ENCODE measurements at regions of chr5 and their contacts with region 1.

Region 1: DNA sequence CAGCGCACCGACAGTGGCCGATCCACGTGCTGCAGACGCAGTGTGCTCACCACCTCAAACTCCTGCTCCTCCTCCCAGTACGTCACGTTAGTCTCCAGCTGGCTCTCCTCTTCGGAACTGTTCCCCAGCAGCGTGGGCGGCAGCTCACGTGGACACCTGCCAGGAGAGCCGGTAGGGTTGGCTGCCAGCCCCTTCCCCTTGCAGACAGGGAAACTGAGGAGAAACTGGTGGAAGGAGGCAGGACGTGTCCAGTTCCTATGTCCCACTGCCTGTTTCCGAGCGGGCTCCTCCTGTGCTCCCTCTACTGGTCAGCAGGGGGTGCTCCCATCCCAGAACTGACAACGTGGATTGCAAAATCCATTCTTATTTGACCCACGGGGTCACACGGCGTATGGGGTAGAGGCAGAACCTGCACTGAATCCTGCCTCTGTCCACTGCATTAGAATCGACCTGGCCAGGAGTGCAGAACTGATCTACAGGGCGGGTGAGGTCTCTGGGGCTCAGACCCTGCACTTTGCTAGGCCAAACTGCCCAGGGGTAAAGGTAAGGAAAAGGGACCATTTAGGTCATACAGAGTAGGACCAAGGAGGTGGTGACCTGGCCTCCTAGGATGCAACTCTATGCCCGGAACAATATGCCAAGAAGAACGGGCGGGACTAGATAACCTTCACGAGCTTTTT is 25.7 kb downstream of the PDGFRB start:
- DNase-seq: peak; percentile 71 to 94
- ATAC-seq: peak; percentile 76 to 93
- H3K4me3 ChIP-seq: no peak overlapping the region
- H3K27ac ChIP-seq: peak overlapping the region; percentile 39 to 76; a peak in 5 of 6 replicates
- H3K4me1 ChIP-seq: peaks cover 4% of the 10 kb centered on the region; the same call in 2 of the 3 replicates
- CTCF ChIP-seq: peak; percentile 96
- EP300 ChIP-seq: no peak
- POLR2A ChIP-seq: no peak
- RAD21 ChIP-seq: peak; percentile 97

Region 2: DNA sequence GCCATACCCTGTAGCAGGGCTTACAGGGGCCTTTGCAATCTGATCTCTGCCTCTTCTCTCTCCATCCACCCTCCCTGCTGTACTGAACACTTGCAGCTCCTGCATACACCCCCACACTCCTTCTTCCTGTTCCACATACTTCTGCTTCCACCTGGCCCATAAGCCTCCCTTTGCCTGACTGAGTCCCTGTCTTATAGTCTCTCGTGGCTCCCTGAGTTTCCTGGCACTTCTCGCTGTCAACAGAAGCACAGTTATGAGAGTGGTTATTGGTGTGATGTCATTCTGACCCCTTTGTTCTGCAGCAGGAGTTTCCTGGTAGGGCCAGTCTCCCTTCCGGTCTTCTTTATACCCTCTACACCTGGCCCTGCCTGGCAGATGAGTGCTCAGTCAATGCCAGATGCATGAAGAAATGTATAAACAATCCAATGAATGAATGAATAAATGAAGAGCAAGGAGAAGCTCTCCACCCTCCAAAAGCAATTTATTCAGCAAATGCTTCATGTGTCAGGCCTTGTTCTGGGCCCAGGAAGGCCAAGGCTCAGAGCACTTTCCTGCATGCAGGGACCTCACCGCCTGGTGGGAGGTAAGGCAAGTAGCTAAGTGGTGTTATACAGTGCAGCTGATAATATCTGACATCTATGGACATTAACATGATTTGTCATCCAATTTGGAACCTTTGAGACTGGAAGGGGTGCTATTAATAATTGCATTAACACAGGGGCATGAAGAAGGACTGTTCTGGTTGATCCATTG is 23.1 kb before region 1 on chr5:
- CTCF ChIA-PET with region 1: interaction called, 98 read pairs
- POLR2A ChIA-PET with region 1: no interaction called
- DNase-seq: no peak
- ATAC-seq: no peak
- H3K4me3 ChIP-seq: no peak overlapping the region
- H3K27ac ChIP-seq: no peak overlapping the region
- H3K4me1 ChIP-seq: no peaks in the 10 kb centered on the region
- CTCF ChIP-seq: no peak
- EP300 ChIP-seq: no peak
- POLR2A ChIP-seq: no peak
- RAD21 ChIP-seq: no peak

Region 3: DNA sequence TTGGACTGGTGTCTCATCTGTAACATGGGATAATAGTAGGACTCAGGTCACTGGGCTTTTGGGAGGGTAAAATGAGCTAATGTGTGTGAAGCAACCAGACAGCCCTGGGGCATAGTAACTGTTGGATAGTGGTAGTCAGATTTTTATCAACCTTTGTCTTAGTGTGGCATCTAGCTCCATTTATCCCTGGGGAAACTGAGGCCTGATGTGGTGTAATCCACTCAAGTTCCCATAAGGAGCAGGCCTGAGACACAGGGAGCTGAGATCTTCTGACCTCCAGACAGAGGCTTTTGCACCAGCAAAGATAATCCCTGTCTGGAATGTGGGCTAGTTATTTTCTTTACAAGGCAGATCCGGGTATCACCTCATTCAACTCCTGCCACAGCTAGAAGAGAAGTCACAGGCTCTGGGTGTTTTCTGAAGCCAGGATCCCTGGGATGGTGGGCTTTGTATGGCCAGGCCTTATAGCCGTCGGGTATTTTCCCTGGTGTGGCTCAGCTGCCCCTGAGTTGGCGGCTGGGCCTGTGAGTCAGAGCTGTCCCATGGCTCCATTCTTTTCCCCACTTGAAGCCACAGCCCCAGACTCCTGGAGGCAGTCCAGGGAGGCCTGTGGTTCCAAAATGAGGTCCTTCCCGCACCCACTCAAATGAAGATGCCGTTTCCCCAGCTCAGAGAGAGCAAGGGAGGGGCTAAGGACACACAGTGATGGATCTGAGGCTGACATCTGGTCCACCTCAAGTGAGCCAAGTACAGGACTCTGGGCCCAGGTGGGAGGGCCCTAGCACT is 17.5 kb before region 1 on chr5:
- CTCF ChIA-PET with region 1: interaction called, 98 read pairs
- POLR2A ChIA-PET with region 1: no interaction called
- DNase-seq: peak in 1 of 2 experiments; percentile 13
- ATAC-seq: peak in 1 of 2 experiments; percentile 51; a peak in 3 of 6 replicates
- H3K4me3 ChIP-seq: no peak overlapping the region
- H3K27ac ChIP-seq: peak overlapping the region; percentile 36 to 38; a peak in 4 of 6 replicates
- H3K4me1 ChIP-seq: peaks cover 9% of the 10 kb centered on the region
- CTCF ChIP-seq: no peak
- EP300 ChIP-seq: no peak
- POLR2A ChIP-seq: no peak
- RAD21 ChIP-seq: no peak

Region 4: DNA sequence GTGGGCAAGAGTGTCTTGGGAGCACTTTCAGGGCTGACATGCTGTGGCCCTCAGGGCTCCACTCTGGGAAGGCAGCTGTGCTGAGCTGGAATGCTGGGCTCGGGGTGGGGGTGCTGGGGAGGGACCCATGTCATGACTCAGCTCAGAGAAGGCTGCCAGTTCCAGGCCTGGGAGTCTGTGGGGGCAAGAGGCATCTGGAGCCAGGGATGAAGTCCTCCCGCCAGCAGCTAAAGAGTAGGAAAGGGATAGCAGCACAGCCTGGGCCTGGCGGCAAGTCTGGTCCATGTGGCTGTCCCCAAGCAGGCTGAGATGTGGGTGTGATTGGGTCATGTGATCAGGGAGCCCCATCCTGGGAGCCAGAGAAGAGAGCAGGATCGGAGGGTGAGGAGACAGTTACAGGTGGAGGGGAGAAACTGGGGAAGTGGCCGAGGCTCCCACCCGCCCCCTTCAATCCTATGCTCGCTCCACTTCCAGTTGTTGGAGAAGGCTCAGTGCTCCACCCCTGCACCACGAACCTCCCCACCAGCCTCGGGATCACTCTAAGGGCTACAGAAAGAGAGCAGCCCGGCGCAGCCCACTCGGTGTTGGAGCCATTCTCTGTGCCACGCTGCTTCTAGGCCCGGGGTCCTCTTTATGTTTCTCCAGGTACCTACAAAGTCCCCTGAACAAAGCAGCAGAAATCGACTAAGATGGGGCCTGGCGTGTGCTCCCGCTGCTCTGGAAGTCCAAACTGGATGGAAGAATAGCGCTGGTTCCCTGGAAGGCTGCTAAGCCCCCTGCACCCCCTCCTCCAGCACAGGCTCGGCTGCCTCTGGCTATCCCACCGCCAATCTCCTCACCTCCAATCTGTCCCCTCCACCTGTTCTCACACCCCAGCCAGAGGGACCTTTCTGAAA is 13.6 kb after region 1 on chr5:
- CTCF ChIA-PET with region 1: interaction called, 29 read pairs
- POLR2A ChIA-PET with region 1: interaction called, 3 read pairs
- DNase-seq: peak; percentile 57 to 62
- ATAC-seq: peak; percentile 75
- H3K4me3 ChIP-seq: no peak overlapping the region
- H3K27ac ChIP-seq: peak overlapping the region; percentile 93 to 98
- H3K4me1 ChIP-seq: peaks cover 57% of the 10 kb centered on the region
- CTCF ChIP-seq: no peak
- EP300 ChIP-seq: peak in 1 of 2 experiments; percentile 28; a peak in 1 of 5 replicates
- POLR2A ChIP-seq: no peak
- RAD21 ChIP-seq: no peak

Region 5: GRCh38 chr5:150161242-150162141 is 31.5 kb after region 1 on chr5:
- CTCF ChIA-PET with region 1: interaction called, 11 read pairs
- POLR2A ChIA-PET with region 1: no interaction called
- DNase-seq: peak; percentile 82 to 92
- ATAC-seq: peak; percentile 89 to 95
- H3K4me3 ChIP-seq: peak overlapping the region; percentile 37
- H3K27ac ChIP-seq: peak overlapping the region; percentile 75 to 79
- H3K4me1 ChIP-seq: peaks cover 8% of the 10 kb centered on the region; the same call in 1 of the 3 replicates
- CTCF ChIP-seq: peak; percentile 67
- EP300 ChIP-seq: no peak
- POLR2A ChIP-seq: no peak
- RAD21 ChIP-seq: peak; percentile 70 to 87

Region 6: GRCh38 chr5:150180241-150181026 is 50.5 kb after region 1 on chr5:
- CTCF ChIA-PET with region 1: interaction called, 10 read pairs
- POLR2A ChIA-PET with region 1: no interaction called
- DNase-seq: no peak
- ATAC-seq: no peak
- H3K4me3 ChIP-seq: no peak overlapping the region
- H3K27ac ChIP-seq: no peak overlapping the region
- H3K4me1 ChIP-seq: no peaks in the 10 kb centered on the region
- CTCF ChIP-seq: no peak
- EP300 ChIP-seq: no peak
- POLR2A ChIP-seq: no peak
- RAD21 ChIP-seq: no peak